ENCODE measurements at regions of chr11 and their contacts with region 1.

Region 1: GRCh38 chr11:75248690-75249268 is 8.2 kb downstream of the TPBGL start:
- DNase-seq: peak; percentile 69 to 89 (median 84)
- H3K4me3 ChIP-seq: peak overlapping the region in 5 of 59 donors; percentile 3 to 32 (median 20)
- H3K27ac ChIP-seq: no peak overlapping the region
- H3K27me3 ChIP-seq: peaks cover 0 to 5% (median 0%) of the 10 kb centered on the region in 45 donors
- CTCF ChIP-seq: peak; percentile 91 to 100 (median 100)

Region 2: DNA sequence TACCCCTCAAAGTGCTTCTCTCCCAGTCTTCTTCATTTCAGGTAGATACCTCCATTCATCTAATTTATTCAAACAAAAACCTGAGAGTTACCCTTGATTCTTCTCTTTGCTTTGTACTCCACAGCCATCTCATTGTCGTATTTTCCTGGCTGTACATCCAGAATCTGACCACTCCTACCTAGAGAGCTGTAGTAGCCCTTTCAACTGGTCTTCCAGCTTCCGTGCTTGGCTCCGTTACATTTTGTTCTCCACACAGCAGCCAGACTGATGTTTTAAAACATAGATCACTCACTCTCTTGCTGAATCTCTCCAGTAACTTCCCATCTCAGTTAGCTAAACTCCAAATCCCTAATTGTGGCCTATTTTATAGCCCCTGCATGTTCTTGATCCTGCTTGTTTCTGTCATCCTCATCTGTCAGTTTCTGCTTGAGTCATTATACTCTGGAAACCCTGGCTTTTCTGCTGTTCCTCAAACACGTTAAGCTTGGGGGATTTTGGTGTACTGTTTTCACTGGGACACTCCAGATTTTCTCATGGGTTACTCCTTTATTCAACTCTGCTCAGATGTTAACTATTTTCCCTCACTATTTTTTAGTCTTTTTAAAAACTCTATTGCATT is 292.3 kb before region 1 on chr11:
- intact Hi-C with region 1: no loop called
- DNase-seq: no peak
- H3K4me3 ChIP-seq: no peak overlapping the region
- H3K27ac ChIP-seq: no peak overlapping the region
- H3K27me3 ChIP-seq: no peaks in the 10 kb centered on the region
- CTCF ChIP-seq: no peak

Region 3: DNA sequence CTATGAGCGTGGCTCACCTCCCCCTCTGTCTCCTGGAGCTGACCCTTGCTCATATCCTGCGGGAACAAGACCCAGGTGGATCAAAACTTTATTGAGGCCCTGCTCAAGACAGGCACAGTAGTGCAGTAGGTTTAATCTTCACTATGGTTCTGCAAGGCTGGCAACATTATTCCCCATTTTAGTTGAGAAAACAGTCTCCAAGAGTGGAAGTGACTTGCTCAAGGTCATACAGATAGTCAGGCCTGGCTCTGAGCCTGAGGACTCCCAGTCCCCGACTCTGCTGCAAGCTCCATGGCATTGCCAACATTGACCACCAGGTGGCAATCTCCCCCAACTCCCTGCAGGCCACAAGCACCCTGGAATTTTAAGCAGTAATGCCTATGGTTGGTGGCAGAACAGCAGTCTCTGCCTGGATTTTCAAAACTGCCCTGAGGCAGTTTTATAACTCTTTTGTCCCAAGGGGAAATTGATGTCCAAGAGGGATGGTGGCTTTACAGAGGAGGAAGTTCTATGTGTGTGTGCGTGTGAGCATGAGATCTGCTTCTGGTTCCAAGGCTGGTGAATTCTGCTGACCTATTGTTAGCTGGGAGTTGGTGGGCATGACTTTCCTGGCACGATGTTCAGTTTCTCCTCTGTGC is 225.9 kb before region 1 on chr11:
- intact Hi-C with region 1: loop called (anchors 2 kb)
- DNase-seq: peak; percentile 78 to 91 (median 87)
- H3K4me3 ChIP-seq: no peak overlapping the region
- H3K27ac ChIP-seq: peak overlapping the region in 58 of 59 donors; percentile 47 to 95 (median 87)
- H3K27me3 ChIP-seq: no peaks in the 10 kb centered on the region
- CTCF ChIP-seq: peak; percentile 93 to 100 (median 99)

Region 4: GRCh38 chr11:75301601-75302345 is 53.0 kb after region 1 on chr11:
- intact Hi-C with region 1: no loop called
- DNase-seq: peak in 1 of 10 donors; percentile 81
- H3K4me3 ChIP-seq: peak overlapping the region in 1 of 59 donors; percentile 48
- H3K27ac ChIP-seq: peak overlapping the region; percentile 60 to 100 (median 94)
- H3K27me3 ChIP-seq: no peaks in the 10 kb centered on the region
- CTCF ChIP-seq: no peak

Measured in dorsolateral prefrontal cortex (tissue), 120 donors.